Prostate gland (tissue), 2 donors: ENCODE measurements at regions of chr14 and their contacts with region 1.

Region 1: GRCh38 chr14:77067632-77068514 is 30.2 kb upstream of the CIPC start:
- DNase-seq: peak; percentile 61
- H3K4me3 ChIP-seq: no peak overlapping the region
- H3K27ac ChIP-seq: peak overlapping the region; percentile 37 to 54
- H3K4me1 ChIP-seq: peaks cover 3% of the 10 kb centered on the region
- H3K27me3 ChIP-seq: no peaks in the 10 kb centered on the region
- CTCF ChIP-seq: peak; percentile 51 to 91 (median 84)
- POLR2A ChIP-seq: peak; percentile 10

Region 2: GRCh38 chr14:76876076-76876475 is 191.8 kb before region 1 on chr14:
- intact Hi-C with region 1: loop called (anchors 1 kb)
- DNase-seq: peak; percentile 56
- H3K4me3 ChIP-seq: no peak overlapping the region
- H3K27ac ChIP-seq: no peak overlapping the region
- H3K4me1 ChIP-seq: no peaks in the 10 kb centered on the region
- H3K27me3 ChIP-seq: no peaks in the 10 kb centered on the region
- CTCF ChIP-seq: peak; percentile 81 to 96 (median 90)
- POLR2A ChIP-seq: no peak

Region 3: GRCh38 chr14:76910371-76910890 is 157.4 kb before region 1 on chr14:
- intact Hi-C with region 1: loop called (anchors 5 kb)
- DNase-seq: no peak
- H3K4me3 ChIP-seq: no peak overlapping the region
- H3K27ac ChIP-seq: no peak overlapping the region
- H3K4me1 ChIP-seq: peaks cover 8% of the 10 kb centered on the region
- H3K27me3 ChIP-seq: no peaks in the 10 kb centered on the region
- CTCF ChIP-seq: no peak
- POLR2A ChIP-seq: no peak